IMR-90 (cell line): ENCODE measurements at regions of chr20 and their contacts with region 1.

Region 1: GRCh38 chr20:17938871-17939619 is 29.5 kb downstream of the SNX5 start:
- DNase-seq: peak; percentile 67
- ATAC-seq: peak; percentile 77
- H3K4me3 ChIP-seq: no peak overlapping the region
- H3K27ac ChIP-seq: no peak overlapping the region; the same call in 1 of the 2 replicates
- H3K4me1 ChIP-seq: peaks cover 23% of the 10 kb centered on the region
- H3K27me3 ChIP-seq: no peaks in the 10 kb centered on the region
- CTCF ChIP-seq: peak; percentile 92
- POLR2A ChIP-seq: no peak; the same call in 1 of the 2 replicates
- RAD21 ChIP-seq: peak; percentile 94

Region 2: DNA sequence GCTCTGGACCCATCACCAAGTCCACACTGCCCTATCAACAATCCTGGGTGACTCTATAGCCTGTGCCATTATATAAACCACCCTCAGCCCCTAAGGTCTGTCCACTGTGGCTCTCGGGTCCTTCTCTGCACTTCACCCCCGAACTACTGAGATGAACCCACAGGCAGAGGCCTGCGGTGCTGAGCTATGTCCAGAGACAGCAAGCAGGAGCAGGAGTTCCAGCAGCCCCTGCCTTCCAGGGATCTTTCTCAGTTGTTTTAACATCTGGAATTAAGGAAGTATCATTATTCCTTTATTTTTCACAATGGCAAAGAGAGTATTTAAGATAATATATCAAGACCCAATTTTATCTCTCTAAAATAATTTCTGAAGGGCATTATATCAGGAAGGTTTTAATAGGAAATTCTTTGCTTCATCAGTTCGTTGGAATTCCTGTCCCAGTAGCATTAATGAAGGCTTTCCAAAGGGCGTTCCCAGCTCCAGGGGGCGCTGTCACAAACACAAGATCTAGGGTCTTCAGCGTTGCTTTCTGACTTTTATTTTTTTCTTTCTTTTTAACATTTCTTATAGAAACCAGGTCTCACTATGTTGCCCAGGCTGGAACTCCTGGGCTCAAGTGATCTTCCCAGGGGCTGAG is 284.3 kb before region 1 on chr20:
- CTCF ChIA-PET with region 1: interaction called, 3 read pairs
- POLR2A ChIA-PET with region 1: no interaction called
- dilution Hi-C with region 1: no loop called
- in situ Hi-C with region 1: no loop called
- intact Hi-C with region 1: loop called (anchors 5 kb)
- DNase-seq: peak; percentile 52
- ATAC-seq: 0 out of 2 replicates have a peak, but pooled peaks have one; percentile 23
- H3K4me3 ChIP-seq: no peak overlapping the region
- H3K27ac ChIP-seq: peak overlapping the region; percentile 25; the same call in 1 of the 2 replicates
- H3K4me1 ChIP-seq: peaks cover 42% of the 10 kb centered on the region
- H3K27me3 ChIP-seq: no peaks in the 10 kb centered on the region
- CTCF ChIP-seq: peak; percentile 76
- POLR2A ChIP-seq: no peak
- RAD21 ChIP-seq: peak; percentile 65

Region 3: DNA sequence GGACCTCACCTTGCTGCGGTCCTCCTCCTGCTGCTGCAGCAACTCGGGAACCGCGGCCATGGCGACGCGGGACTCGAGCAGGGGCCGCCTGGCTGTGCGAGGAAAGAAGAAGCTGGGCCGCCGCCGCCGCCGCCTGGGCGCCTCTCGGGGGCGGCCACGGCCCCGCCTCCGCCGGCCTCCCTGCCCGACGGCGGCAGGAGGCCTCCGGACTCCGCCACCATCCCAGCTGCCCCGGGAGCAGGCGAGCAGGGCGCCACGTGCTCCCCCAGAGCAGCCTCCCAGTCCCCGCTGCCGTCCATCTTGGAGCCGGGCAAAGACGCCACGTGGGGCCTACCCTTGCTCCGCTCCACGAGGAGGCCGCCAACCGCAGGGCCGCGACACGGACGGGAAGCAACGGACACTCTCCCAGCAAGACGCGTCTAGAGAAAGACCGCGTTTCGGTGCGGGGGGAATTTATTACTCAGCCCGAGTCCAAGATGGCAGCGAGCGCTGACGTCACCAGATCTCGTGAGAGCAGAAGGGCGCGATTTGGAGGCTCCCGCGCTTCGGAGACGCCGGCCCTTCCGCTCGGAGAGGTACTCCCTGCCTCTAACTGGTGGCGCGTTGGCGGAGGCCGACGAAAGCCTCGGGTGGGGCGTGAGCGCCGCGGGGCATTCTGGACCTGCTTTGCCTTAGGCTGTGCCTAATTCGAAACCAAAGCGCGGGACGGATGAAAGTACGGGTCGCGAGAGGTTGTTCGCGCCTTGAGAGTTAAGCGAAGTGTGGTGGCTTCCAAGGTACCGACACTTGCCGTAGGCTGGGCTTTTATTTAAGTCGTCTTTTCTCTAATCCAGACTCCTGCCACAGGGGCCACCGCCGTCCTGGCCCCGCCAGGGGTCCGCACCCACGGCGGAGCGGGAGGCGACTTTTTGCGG is 29.6 kb after region 1 on chr20 and contains the starts of genes MGME1 and SNX5:
- CTCF ChIA-PET with region 1: no interaction called
- POLR2A ChIA-PET with region 1: no interaction called
- dilution Hi-C with region 1: no loop called
- in situ Hi-C with region 1: no loop called
- intact Hi-C with region 1: no loop called
- DNase-seq: peak; percentile 99
- ATAC-seq: peak; percentile 93
- H3K4me3 ChIP-seq: peak within 1 kb of the TSS; percentile 83
- H3K27ac ChIP-seq: peak within 1 kb of the TSS; percentile 99
- H3K4me1 ChIP-seq: peaks cover 11% of the 10 kb centered on the region
- H3K27me3 ChIP-seq: no peaks in the 10 kb centered on the region
- CTCF ChIP-seq: no peak
- POLR2A ChIP-seq: peak; percentile 97
- RAD21 ChIP-seq: no peak
- total RNA-seq, gene MGME1: 7.2 and 8.1 TPM in 2 replicates
- total RNA-seq, gene SNX5: 65.4 and 85.0 TPM in 2 replicates